BJ (cell line): ENCODE measurements at regions of chr19 and their contacts with region 1.

Region 1: GRCh38 chr19:17859533-17860330 is at the start of gene RPL18A:
- DNase-seq: peak; percentile 99
- H3K4me3 ChIP-seq: peak within 1 kb of the TSS; percentile 98
- H3K27me3 ChIP-seq: no peaks in the 10 kb centered on the region
- CTCF ChIP-seq: peak; percentile 94
- polyA plus RNA-seq, gene RPL18A: 1,501 and 2,264 TPM in 2 replicates

Region 2: GRCh38 chr19:17530586-17530985 is 329.1 kb before region 1 on chr19:
- CTCF ChIA-PET with region 1: no interaction called
- POLR2A ChIA-PET with region 1: no interaction called
- DNase-seq: no peak
- H3K4me3 ChIP-seq: no peak overlapping the region
- H3K27me3 ChIP-seq: 0 out of 2 replicates have a peak, but pooled peaks cover 2% of the 10 kb centered on the region
- CTCF ChIP-seq: no peak

Region 3: GRCh38 chr19:17703824-17704463 is 155.8 kb before region 1 on chr19:
- CTCF ChIA-PET with region 1: interaction called, 18 read pairs
- POLR2A ChIA-PET with region 1: no interaction called
- DNase-seq: no peak
- H3K4me3 ChIP-seq: no peak overlapping the region
- H3K27me3 ChIP-seq: peaks cover 2% of the 10 kb centered on the region; the same call in 1 of the 2 replicates
- CTCF ChIP-seq: peak; percentile 74

Region 4: GRCh38 chr19:17847538-17848366 is 12.0 kb before region 1 on chr19 and contains the start of gene JAK3:
- CTCF ChIA-PET with region 1: interaction called, 30 read pairs
- POLR2A ChIA-PET with region 1: interaction called, 4 read pairs
- DNase-seq: no peak
- H3K4me3 ChIP-seq: peak within 1 kb of the TSS; percentile 52
- H3K27me3 ChIP-seq: no peaks in the 10 kb centered on the region
- CTCF ChIP-seq: no peak
- polyA plus RNA-seq, gene JAK3: 3.3 and 6.1 TPM in 2 replicates

Region 5: GRCh38 chr19:18000935-18001778 is 141.4 kb after region 1 on chr19:
- CTCF ChIA-PET with region 1: interaction called, 22 read pairs
- POLR2A ChIA-PET with region 1: no interaction called
- DNase-seq: peak; percentile 42
- H3K4me3 ChIP-seq: peak overlapping the region; percentile 87
- H3K27me3 ChIP-seq: no peaks in the 10 kb centered on the region
- CTCF ChIP-seq: no peak